ENCODE measurements at regions of chr6 and their contacts with region 1.

Region 1: GRCh38 chr6:145756146-145756662 is 20.9 kb upstream of the EPM2A start:
- DNase-seq: peak in 1 of 9 experiments; percentile 6
- ATAC-seq: no peak
- H3K4me3 ChIP-seq: no peak overlapping the region
- H3K4me3 Mint-ChIP-seq: no peak overlapping the region
- H3K27ac ChIP-seq: no peak overlapping the region
- H3K27ac Mint-ChIP-seq: no peak overlapping the region
- H3K4me1 ChIP-seq: no peaks in the 10 kb centered on the region
- H3K4me1 Mint-ChIP-seq: no peaks in the 10 kb centered on the region
- H3K27me3 ChIP-seq: no peaks in the 10 kb centered on the region
- H3K27me3 Mint-ChIP-seq: peaks cover 2% of the 10 kb centered on the region
- CTCF ChIP-seq: no peak

Region 2: DNA sequence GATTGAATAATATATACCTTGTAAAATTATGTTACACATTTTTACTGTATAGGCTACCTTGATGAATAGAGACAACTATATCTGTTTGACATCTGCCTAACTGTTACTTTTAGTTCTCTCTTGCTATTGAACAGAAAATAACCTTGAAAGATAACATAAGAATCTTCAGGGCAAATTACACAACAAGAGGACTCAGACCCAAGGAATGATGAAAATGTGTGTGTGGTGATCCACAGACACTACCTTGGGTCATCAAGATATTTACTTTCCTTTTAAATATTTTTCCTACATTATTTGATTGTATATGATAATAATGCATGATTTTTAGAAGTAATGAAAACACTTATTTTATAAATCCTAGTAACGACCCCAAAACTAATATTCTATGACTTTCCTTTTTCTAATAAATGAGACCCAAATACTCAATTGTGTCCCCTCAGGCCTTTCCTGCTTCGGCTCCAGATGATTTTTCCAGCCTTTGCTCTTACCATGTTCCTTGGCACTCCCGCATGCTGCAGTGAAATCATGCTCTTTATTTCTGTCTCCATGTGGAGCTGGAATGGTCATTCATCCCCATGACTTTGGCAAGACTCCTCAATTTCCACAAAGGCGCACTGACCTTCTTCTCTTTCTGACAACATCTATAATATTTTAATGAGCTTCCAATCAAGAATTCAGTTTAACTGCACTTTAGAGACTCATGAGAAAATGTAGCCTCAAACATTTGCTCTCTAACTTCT is 208.4 kb before region 1 on chr6:
- CTCF ChIA-PET with region 1: no interaction called
- POLR2A ChIA-PET with region 1: no interaction called
- intact Hi-C with region 1: no loop called
- DNase-seq: no peak
- ATAC-seq: no peak
- H3K4me3 ChIP-seq: no peak overlapping the region
- H3K4me3 Mint-ChIP-seq: no peak overlapping the region
- H3K27ac ChIP-seq: no peak overlapping the region
- H3K27ac Mint-ChIP-seq: no peak overlapping the region
- H3K4me1 ChIP-seq: no peaks in the 10 kb centered on the region
- H3K4me1 Mint-ChIP-seq: no peaks in the 10 kb centered on the region
- H3K27me3 ChIP-seq: no peaks in the 10 kb centered on the region
- H3K27me3 Mint-ChIP-seq: no peaks in the 10 kb centered on the region
- CTCF ChIP-seq: no peak

Region 3: GRCh38 chr6:145772846-145773245 is 16.6 kb after region 1 on chr6:
- CTCF ChIA-PET with region 1: no interaction called
- POLR2A ChIA-PET with region 1: no interaction called
- intact Hi-C with region 1: loop called in 1 of 2 experiments (anchors 1 kb)
- DNase-seq: no peak
- ATAC-seq: no peak
- H3K4me3 ChIP-seq: no peak overlapping the region
- H3K4me3 Mint-ChIP-seq: no peak overlapping the region
- H3K27ac ChIP-seq: no peak overlapping the region
- H3K27ac Mint-ChIP-seq: no peak overlapping the region
- H3K4me1 ChIP-seq: no peaks in the 10 kb centered on the region
- H3K4me1 Mint-ChIP-seq: no peaks in the 10 kb centered on the region
- H3K27me3 ChIP-seq: peaks cover 0 to 3% of the 10 kb centered on the region in 2 experiments
- H3K27me3 Mint-ChIP-seq: no peaks in the 10 kb centered on the region
- CTCF ChIP-seq: no peak